GM12878 (cell line): ENCODE measurements at regions of chr1 and their contacts with region 1.

Region 1: GRCh38 chr1:212950243-212951125 is at the start of gene VASH2:
- DNase-seq: peak; percentile 59
- ATAC-seq: peak; percentile 92
- H3K4me3 ChIP-seq: peak within 1 kb of the TSS; percentile 95
- H3K27ac ChIP-seq: peak within 1 kb of the TSS; percentile 92
- H3K4me1 ChIP-seq: peaks cover 48% of the 10 kb centered on the region
- H3K27me3 ChIP-seq: no peaks in the 10 kb centered on the region
- CTCF ChIP-seq: no peak; a peak in 1 of 6 replicates
- EP300 ChIP-seq: no peak
- POLR2A ChIP-seq: peak; percentile 71
- RAD21 ChIP-seq: no peak
- polyA plus RNA-seq, gene VASH2: 5.4 to 6.5 TPM

Region 2: DNA sequence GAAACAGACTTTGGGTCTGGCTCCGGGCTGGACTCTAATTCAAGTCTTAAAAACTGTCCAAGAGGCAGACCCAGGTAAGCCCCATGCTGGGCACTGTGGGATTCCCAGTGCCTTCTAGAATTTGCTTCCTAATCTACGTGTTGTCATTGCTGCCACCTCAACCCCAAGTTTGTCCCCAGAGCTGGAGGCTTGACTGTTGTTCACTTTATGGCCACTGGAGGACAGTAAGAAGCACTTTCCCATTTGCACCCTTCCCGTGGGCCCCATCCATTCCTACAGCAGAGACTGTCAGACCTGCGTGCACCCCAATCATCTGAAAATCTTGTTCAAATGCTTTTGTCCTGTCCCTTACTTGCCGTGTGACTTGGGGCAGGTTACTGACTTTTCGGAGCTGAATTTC is 29.6 kb before region 1 on chr1:
- CTCF ChIA-PET with region 1: interaction called, 6 read pairs
- POLR2A ChIA-PET with region 1: interaction called, 18 read pairs
- RAD21 ChIA-PET with region 1: interaction called, 6 read pairs
- SMC1A ChIA-PET with region 1: interaction called, 27 read pairs
- in situ Hi-C with region 1: no loop called
- intact Hi-C with region 1: no loop called
- DNase-seq: no peak
- ATAC-seq: peak; percentile 51
- H3K4me3 ChIP-seq: no peak overlapping the region
- H3K27ac ChIP-seq: no peak overlapping the region
- H3K4me1 ChIP-seq: peaks cover 20% of the 10 kb centered on the region
- H3K27me3 ChIP-seq: no peaks in the 10 kb centered on the region
- CTCF ChIP-seq: peak; percentile 45 to 67 (median 57); a peak in 5 of 6 replicates
- EP300 ChIP-seq: no peak
- POLR2A ChIP-seq: no peak
- RAD21 ChIP-seq: peak; percentile 71

Region 3: DNA sequence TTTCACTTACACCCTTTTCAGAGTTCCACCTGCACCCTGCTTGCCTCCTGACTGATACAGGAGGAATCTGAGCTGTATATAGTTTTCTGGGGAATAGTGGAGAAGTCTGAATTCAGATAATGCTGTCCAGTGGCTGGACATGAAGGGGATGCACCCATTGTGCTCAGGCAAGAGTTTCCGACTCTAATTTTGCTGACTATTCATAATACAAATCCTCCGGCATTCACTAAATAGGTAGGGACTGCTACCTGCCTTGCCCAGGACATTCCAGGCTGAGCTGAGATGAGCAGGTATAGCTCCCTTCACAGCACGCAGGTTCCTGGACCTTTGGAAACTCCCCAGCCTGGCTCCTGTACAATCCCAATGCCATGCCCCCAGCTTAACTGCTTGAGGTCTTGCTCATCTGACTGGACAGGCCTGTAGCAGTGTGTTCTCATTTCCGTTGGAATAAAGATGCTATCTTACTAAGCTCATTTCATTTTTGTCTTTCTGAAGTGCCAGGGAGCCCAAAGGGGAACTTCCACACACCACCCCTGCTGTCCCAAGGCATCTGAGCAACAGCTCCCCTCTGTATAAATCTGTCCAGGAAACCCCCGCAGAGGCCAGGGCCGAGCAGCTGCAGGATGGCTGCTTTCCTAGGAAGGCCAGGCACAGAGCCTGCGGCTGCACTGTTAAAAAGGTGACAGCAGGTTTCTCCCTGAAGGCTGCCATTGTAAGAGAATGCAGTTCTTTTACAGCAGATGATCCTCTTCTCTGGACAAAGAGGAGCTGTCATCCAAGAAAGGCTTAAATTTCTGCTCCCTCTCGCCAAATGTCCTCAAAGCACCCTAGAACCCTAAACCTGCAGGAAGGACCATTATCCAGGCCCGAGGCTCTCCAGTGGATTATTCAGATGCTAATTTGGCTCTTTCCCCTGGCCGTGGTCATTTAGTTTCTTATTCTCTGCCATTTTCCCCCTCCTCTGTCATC is 21.9 kb before region 1 on chr1:
- CTCF ChIA-PET with region 1: interaction called, 8 read pairs
- POLR2A ChIA-PET with region 1: interaction called, 33 read pairs
- RAD21 ChIA-PET with region 1: interaction called, 13 read pairs
- SMC1A ChIA-PET with region 1: interaction called, 22 read pairs
- in situ Hi-C with region 1: no loop called
- intact Hi-C with region 1: loop called (anchors 2 kb)
- DNase-seq: peak; percentile 65
- ATAC-seq: peak; percentile 87
- H3K4me3 ChIP-seq: no peak overlapping the region
- H3K27ac ChIP-seq: peak overlapping the region; percentile 79
- H3K4me1 ChIP-seq: peaks cover 18% of the 10 kb centered on the region
- H3K27me3 ChIP-seq: no peaks in the 10 kb centered on the region
- CTCF ChIP-seq: no peak
- EP300 ChIP-seq: no peak
- POLR2A ChIP-seq: no peak
- RAD21 ChIP-seq: no peak

Region 4: DNA sequence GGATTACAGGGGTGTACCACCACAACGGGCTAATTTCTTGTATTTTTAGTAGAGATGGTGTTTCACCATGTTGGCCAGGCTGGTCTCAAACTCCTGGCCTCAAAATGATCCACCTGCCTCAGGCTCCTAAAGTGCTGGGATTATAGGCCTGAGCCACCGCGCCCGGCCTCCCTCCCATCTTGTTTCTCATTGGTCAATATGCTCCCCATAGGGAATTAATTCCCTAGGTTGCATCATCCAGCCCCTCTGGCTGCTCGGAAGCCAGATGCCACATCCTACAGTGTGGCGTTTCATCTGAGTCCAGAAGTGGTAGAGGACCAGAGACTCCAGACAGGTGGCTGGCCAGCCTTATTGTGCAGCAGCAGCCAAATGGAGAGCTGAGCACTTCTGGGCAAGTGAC is 11.6 kb before region 1 on chr1:
- CTCF ChIA-PET with region 1: interaction called, 6 read pairs
- POLR2A ChIA-PET with region 1: interaction called, 14 read pairs
- RAD21 ChIA-PET with region 1: interaction called, 9 read pairs
- SMC1A ChIA-PET with region 1: interaction called, 40 read pairs
- in situ Hi-C with region 1: no loop called
- intact Hi-C with region 1: no loop called
- DNase-seq: no peak
- ATAC-seq: no peak
- H3K4me3 ChIP-seq: no peak overlapping the region
- H3K27ac ChIP-seq: no peak overlapping the region
- H3K4me1 ChIP-seq: peaks cover 8% of the 10 kb centered on the region
- H3K27me3 ChIP-seq: no peaks in the 10 kb centered on the region
- CTCF ChIP-seq: no peak
- EP300 ChIP-seq: no peak
- POLR2A ChIP-seq: no peak
- RAD21 ChIP-seq: no peak

Region 5: DNA sequence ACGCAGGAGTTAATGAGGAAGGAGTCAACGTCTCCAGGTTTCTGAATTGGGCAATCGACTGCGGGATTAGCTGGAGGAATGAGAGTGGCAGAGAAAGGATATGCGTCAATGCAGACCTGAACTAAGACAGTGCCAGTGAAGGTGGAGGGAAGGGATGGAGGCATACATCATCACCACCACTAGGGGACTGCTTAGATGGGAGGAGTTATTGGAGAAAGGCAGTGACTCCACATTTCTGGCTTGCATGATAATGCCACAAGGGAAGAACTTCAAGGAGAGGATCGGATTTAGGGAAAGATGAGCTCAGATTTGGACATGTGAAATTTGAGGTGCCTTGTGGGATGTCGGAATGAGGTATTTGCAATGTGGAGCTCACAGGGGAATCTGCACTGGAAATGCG is 17.3 kb after region 1 on chr1:
- CTCF ChIA-PET with region 1: interaction called, 9 read pairs
- POLR2A ChIA-PET with region 1: interaction called, 16 read pairs
- RAD21 ChIA-PET with region 1: interaction called, 3 read pairs
- SMC1A ChIA-PET with region 1: interaction called, 13 read pairs
- in situ Hi-C with region 1: no loop called
- intact Hi-C with region 1: no loop called
- DNase-seq: no peak
- ATAC-seq: peak; percentile 92
- H3K4me3 ChIP-seq: no peak overlapping the region
- H3K27ac ChIP-seq: 0 out of 2 replicates have a peak overlapping the region, but pooled peaks have one; percentile 12
- H3K4me1 ChIP-seq: peaks cover 24% of the 10 kb centered on the region
- H3K27me3 ChIP-seq: no peaks in the 10 kb centered on the region
- CTCF ChIP-seq: peak; percentile 36 to 70 (median 66)
- EP300 ChIP-seq: no peak
- POLR2A ChIP-seq: no peak
- RAD21 ChIP-seq: peak; percentile 36; the same call in 1 of the 2 replicates